ENCODE measurements at regions of chr17 and their contacts with region 1.

Region 1: GRCh38 chr17:18960803-18961511 is 9.0 kb downstream of the SLC5A10 start:
- DNase-seq: peak; percentile 86
- ATAC-seq: peak; percentile 93
- H3K4me3 ChIP-seq: no peak overlapping the region
- H3K4me3 Mint-ChIP-seq: no peak overlapping the region
- H3K27ac ChIP-seq: no peak overlapping the region
- H3K27ac Mint-ChIP-seq: no peak overlapping the region
- H3K4me1 ChIP-seq: peaks cover 0 to 13% of the 10 kb centered on the region in 2 donors
- H3K4me1 Mint-ChIP-seq: peaks cover 5% of the 10 kb centered on the region
- H3K27me3 ChIP-seq: no peaks in the 10 kb centered on the region
- H3K27me3 Mint-ChIP-seq: no peaks in the 10 kb centered on the region
- CTCF ChIP-seq: peak; percentile 92

Region 2: DNA sequence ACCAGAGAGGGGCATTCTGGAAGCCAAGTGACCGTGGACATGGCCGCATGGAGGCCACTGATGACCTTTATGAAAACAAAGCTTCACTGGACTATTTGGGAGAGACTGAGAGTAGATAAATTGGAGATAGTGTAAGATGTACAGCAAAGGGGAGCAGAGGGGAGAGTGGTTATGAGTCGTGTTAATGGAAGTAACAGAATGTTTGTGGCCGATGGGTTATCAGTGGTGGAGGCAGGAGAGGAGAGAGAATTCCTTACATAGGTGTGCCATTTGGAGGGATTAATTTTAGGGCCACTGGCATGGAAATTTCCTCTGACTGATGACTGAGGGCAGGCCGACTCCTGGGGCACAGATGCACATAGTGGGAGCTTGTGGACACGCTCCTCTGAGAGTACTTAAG is 83.9 kb before region 1 on chr17:
- CTCF ChIA-PET with region 1: no interaction called
- POLR2A ChIA-PET with region 1: no interaction called
- intact Hi-C with region 1: no loop called
- DNase-seq: no peak
- ATAC-seq: no peak
- H3K4me3 ChIP-seq: no peak overlapping the region
- H3K4me3 Mint-ChIP-seq: no peak overlapping the region
- H3K27ac ChIP-seq: no peak overlapping the region
- H3K27ac Mint-ChIP-seq: no peak overlapping the region
- H3K4me1 ChIP-seq: no peaks in the 10 kb centered on the region
- H3K4me1 Mint-ChIP-seq: no peaks in the 10 kb centered on the region
- H3K27me3 ChIP-seq: no peaks in the 10 kb centered on the region
- H3K27me3 Mint-ChIP-seq: no peaks in the 10 kb centered on the region
- CTCF ChIP-seq: no peak

Region 3: GRCh38 chr17:18896947-18897346 is 64.0 kb before region 1 on chr17:
- CTCF ChIA-PET with region 1: interaction called, 14 read pairs
- POLR2A ChIA-PET with region 1: no interaction called
- intact Hi-C with region 1: no loop called
- DNase-seq: no peak
- ATAC-seq: no peak
- H3K4me3 ChIP-seq: no peak overlapping the region
- H3K4me3 Mint-ChIP-seq: no peak overlapping the region
- H3K27ac ChIP-seq: no peak overlapping the region
- H3K27ac Mint-ChIP-seq: no peak overlapping the region
- H3K4me1 ChIP-seq: peaks cover 33% of the 10 kb centered on the region in 2 donors
- H3K4me1 Mint-ChIP-seq: peaks cover 33% of the 10 kb centered on the region
- H3K27me3 ChIP-seq: no peaks in the 10 kb centered on the region
- H3K27me3 Mint-ChIP-seq: no peaks in the 10 kb centered on the region
- CTCF ChIP-seq: no peak

Region 4: GRCh38 chr17:18944646-18945045 is 16.3 kb before region 1 on chr17:
- CTCF ChIA-PET with region 1: interaction called, 10 read pairs
- POLR2A ChIA-PET with region 1: no interaction called
- intact Hi-C with region 1: no loop called
- DNase-seq: peak; percentile 49
- ATAC-seq: peak; percentile 81
- H3K4me3 ChIP-seq: no peak overlapping the region
- H3K4me3 Mint-ChIP-seq: peak overlapping the region; percentile 45
- H3K27ac ChIP-seq: no peak overlapping the region
- H3K27ac Mint-ChIP-seq: no peak overlapping the region
- H3K4me1 ChIP-seq: peaks cover 11 to 13% of the 10 kb centered on the region in 2 donors
- H3K4me1 Mint-ChIP-seq: peaks cover 16% of the 10 kb centered on the region
- H3K27me3 ChIP-seq: peaks cover 0 to 13% (median 4%) of the 10 kb centered on the region in 4 experiments
- H3K27me3 Mint-ChIP-seq: peaks cover 49% of the 10 kb centered on the region
- CTCF ChIP-seq: no peak

Region 5: GRCh38 chr17:19004421-19005136 is 43.6 kb after region 1 on chr17 and contains the start of gene FAM83G:
- CTCF ChIA-PET with region 1: interaction called, 21 read pairs
- POLR2A ChIA-PET with region 1: no interaction called
- intact Hi-C with region 1: no loop called
- DNase-seq: peak; percentile 78
- ATAC-seq: peak; percentile 83
- H3K4me3 ChIP-seq: peak within 1 kb of the TSS; percentile 43 to 85 (median 77)
- H3K4me3 Mint-ChIP-seq: peak within 1 kb of the TSS; percentile 88
- H3K27ac ChIP-seq: peak within 1 kb of the TSS; percentile 48 to 78
- H3K27ac Mint-ChIP-seq: peak within 1 kb of the TSS; percentile 84
- H3K4me1 ChIP-seq: peaks cover 26 to 40% of the 10 kb centered on the region in 2 donors
- H3K4me1 Mint-ChIP-seq: peaks cover 40% of the 10 kb centered on the region
- H3K27me3 ChIP-seq: no peaks in the 10 kb centered on the region
- H3K27me3 Mint-ChIP-seq: no peaks in the 10 kb centered on the region
- CTCF ChIP-seq: no peak
- total RNA-seq, gene FAM83G: 14.3 and 14.6 TPM in 2 replicates